Left ventricle myocardium superior (tissue), 1 donor: ENCODE measurements at regions of chr2 and their contacts with region 1.

Region 1: GRCh38 chr2:134301099-134301927 is 47.4 kb downstream of the MGAT5 start:
- DNase-seq: no peak
- ATAC-seq: peak; percentile 90

Region 2: GRCh38 chr2:134368009-134368817 is 66.9 kb after region 1 on chr2:
- intact Hi-C with region 1: loop called (anchors 10 kb)
- DNase-seq: no peak
- ATAC-seq: peak; percentile 31

Region 3: DNA sequence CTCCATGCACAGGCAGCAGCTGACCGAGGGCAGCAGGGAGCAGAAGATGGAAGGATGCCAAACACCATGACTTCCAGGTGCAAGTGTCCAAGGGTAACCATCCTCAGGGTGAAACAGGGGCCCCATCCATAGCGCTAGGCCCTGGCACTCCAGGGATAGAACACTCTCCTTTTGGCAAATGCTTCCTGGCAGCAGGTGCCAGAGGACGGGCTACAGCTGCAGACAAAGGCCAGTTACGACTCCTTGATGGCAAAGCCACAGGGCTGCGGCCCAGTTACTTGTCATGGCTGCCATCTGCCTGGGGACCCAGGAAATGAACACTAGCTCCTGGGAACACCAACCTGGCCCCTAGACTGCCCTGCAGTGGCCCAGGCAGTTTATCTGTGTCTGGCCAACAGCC is 238.7 kb after region 1 on chr2:
- intact Hi-C with region 1: no loop called
- DNase-seq: peak; percentile 33
- ATAC-seq: peak; percentile 49